HEK293T (cell line): ENCODE measurements at regions of chr11 and their contacts with region 1.

Region 1: DNA sequence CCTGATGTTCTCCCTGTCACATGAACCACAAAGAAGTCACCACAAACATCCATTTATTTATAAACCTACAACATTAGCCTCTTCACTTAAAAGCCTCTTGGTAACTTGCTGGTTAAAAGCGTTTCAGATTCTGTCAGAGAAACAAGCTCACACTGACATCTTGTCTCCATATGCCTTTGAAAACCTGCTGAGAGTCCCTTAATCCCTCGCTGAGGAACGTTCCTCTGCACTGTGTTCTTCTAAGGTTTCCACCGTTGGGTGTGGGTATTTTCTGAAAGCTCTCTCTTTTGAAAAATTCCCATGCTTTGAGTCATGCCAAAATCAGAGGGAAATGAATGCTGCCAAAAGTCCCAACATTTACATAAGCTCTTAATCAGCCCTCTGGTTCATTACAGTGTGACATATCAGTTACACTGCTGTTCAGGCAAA is 149.8 kb downstream of the CCDC34 start:
- DNase-seq: no peak

Region 2: DNA sequence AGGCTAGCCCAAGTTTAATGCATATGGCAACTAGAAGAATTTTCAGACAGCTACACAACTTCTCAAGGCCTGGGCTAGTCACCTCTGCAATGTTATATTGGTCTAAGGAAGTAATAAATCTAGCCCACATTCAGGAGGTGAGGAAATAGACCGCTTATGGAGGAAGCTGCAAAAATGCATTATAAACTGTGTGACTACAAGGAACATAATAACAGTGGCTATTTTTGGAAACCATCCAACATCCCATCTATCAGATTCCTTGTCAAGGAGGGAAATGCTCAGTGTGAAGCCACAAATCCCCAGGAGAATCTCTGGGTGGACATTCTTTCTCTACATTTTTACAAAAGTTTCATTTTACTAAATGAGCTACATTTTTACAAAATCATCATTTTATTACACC is 96.6 kb before region 1 on chr11:
- CTCF ChIA-PET with region 1: no interaction called
- POLR2A ChIA-PET with region 1: no interaction called
- DNase-seq: peak; percentile 8

Region 3: DNA sequence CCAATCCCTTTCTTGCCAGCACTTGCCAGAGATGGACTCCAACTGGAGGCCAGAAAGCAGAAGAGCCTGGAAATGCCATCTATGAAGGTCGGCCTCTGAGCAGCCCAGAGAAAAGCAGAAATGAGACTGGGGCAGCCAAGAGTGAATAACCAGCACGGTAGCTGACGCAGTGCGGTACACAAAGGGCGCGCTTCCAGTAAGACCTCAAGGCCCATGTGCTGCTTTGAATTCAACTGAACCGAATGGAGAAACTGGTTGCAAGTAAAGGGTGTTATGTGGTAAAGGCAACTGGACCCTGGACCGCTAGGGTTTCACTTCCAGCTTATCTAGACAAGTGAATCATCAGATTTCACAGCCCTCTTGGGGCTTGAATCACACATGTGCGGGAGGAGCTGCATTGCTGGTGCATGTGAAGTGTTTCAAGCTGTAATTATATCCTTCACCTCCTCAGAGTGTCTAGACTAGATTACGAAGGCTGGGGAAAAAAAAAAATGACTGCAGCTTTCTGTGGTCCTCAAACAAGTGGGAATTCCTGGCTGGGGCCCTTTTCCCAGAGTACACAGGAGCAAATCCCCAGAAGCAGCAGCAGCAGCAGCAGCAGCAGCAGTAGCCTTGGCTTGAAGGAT is 20.9 kb after region 1 on chr11:
- CTCF ChIA-PET with region 1: interaction called, 5 read pairs
- POLR2A ChIA-PET with region 1: interaction called, 17 read pairs
- DNase-seq: peak; percentile 57

Region 4: GRCh38 chr11:27464154-27464759 is 251.0 kb after region 1 on chr11:
- CTCF ChIA-PET with region 1: no interaction called
- POLR2A ChIA-PET with region 1: no interaction called
- DNase-seq: no peak